Heart right ventricle (tissue), 16 donors: ENCODE measurements at regions of chr11 and their contacts with region 1.

Region 1: DNA sequence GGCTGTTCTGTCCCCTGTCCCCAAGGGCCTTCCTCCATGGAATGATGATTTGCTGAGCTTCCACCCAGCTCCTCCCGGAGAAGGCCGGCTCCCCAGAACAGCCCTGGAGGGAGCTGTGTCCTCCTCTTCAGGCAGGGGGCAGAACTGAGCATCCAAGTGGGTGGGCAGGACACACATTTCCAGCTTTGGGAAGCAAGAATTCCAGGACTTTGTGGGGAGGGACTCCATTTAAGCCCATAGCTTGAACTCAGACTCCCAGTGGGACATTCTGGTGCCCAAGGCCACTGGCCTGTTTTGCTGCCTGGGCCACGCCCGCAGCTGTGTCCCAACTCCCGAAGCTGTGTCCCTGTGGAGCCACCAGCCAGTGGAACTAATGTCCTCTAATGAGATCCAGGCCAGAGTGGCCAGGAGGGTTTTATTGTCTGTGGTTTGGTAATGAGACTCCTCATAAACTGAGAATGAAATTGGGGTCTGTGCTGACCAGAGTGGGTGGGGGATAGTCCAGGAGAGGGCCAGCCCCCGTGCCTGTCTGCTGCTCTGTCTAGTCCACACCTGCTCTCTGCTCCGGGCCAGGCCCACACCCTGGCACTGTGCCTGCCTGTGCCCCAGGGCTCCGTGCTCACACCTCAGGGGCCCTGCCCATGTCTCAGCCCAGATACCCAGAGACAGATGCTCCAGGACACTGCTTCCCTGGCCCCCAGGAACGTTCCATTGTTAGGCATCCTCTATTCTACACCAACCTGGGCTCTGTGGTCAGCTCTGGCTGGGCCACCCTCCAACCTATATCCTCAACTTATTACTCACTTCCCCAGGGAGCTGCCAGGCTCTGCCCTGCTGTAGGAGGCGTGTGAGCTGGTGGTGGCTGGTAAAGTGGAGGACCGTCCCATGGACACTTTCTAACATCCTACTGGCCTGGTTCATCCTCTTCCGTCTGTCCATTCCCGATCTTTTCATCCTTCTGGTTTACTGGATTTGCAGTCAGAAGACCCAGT is 7.6 kb downstream of the NECTIN1 start:
- DNase-seq: peak; percentile 56 to 64
- ATAC-seq: peak; percentile 62 to 89 (median 72)
- H3K4me3 ChIP-seq: no peak overlapping the region
- H3K27ac ChIP-seq: no peak overlapping the region
- H3K4me1 ChIP-seq: peaks cover 0 to 21% (median 8%) of the 10 kb centered on the region in 9 donors
- H3K27me3 ChIP-seq: no peaks in the 10 kb centered on the region
- CTCF ChIP-seq: peak; percentile 16 to 66 (median 54)

Region 2: GRCh38 chr11:119673759-119674336 is 47.6 kb before region 1 on chr11:
- intact Hi-C with region 1: loop called in 5 of 10 experiments (anchors 5 kb)
- DNase-seq: no peak
- ATAC-seq: no peak
- H3K4me3 ChIP-seq: no peak overlapping the region
- H3K27ac ChIP-seq: no peak overlapping the region
- H3K4me1 ChIP-seq: peaks cover 8 to 41% (median 27%) of the 10 kb centered on the region in 9 donors
- H3K27me3 ChIP-seq: no peaks in the 10 kb centered on the region
- CTCF ChIP-seq: peak in 1 of 9 donors; percentile 4

Region 3: DNA sequence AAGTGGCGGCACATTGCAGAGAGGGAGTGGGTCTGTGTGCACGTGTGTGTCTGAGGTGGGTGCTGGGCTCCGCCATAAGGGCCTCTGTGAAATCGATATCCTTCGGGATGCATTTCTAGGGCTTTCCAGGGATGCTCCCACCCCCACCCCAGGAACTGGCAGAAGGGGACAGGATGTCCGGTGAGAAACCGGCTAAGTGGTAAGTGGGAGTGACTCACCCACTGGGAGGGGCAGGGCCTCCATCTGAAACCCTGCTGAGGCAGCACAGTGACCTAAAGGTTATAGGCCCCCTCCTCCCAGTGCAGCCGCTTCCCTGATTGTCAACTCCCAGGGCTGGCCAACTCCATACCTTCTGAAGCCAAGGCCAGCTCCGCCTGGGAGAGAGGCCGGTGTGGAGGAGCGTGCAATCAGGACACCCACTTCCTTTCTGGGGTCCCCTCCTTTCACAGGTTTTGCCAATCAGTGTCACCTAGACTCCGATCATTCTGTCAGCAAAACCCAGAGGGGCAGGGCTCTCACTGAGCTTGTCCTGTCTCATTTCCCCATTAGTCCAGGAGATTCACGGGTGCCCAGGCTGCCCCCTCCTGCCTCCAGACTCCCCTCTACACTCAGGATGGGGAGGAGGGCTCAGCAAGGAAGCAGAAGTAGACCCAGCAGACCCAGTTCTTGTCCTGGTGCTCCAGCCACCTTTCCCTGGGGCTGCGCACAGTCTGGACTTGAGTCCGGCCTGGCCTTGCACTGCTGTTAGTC is 36.9 kb before region 1 on chr11:
- intact Hi-C with region 1: loop called in 5 of 10 experiments (anchors 5 kb)
- DNase-seq: no peak
- ATAC-seq: peak in 4 of 8 donors; percentile 25 to 51 (median 40)
- H3K4me3 ChIP-seq: no peak overlapping the region
- H3K27ac ChIP-seq: no peak overlapping the region
- H3K4me1 ChIP-seq: peaks cover 3 to 40% (median 27%) of the 10 kb centered on the region in 9 donors
- H3K27me3 ChIP-seq: no peaks in the 10 kb centered on the region
- CTCF ChIP-seq: no peak